Activated CD8-positive, alpha-beta T cell treated with anti-CD3 and anti-CD28 coated beads, Interleukin-2, amount 10 ng/mL, durations not matched to agents 7 days and 5 days (primary cell): ENCODE measurements at regions of chr20 and their contacts with region 1.

Region 1: GRCh38 chr20:44683263-44684046 is 31.7 kb upstream of the CCN5 start:
- DNase-seq: peak; percentile 81
- ATAC-seq: peak; percentile 84
- H3K4me3 Mint-ChIP-seq: no peak overlapping the region
- H3K27ac Mint-ChIP-seq: no peak overlapping the region
- H3K4me1 Mint-ChIP-seq: peaks cover 13% of the 10 kb centered on the region
- H3K27me3 Mint-ChIP-seq: no peaks in the 10 kb centered on the region

Region 2: DNA sequence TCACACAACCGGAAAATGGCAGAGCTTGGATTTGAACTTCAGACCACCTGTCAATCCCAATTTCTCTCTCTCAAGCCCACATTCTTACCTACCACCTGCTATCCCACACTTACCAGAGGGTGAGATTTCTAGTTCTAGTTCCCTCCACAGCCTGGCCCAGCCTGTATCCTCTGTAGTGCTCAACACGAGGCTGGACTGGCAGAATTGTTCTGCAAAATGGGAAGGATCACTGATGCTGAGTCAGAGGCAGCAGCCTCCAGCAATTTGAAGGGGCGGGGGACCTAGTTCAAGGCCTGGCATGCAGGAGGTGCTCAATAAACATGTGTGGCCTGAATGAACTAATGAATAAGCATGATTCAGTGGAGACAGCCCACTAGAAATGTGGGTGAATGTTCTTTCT is 261.4 kb before region 1 on chr20:
- CTCF ChIA-PET with region 1: no interaction called
- POLR2A ChIA-PET with region 1: no interaction called
- DNase-seq: no peak
- ATAC-seq: no peak
- H3K4me3 Mint-ChIP-seq: no peak overlapping the region
- H3K27ac Mint-ChIP-seq: no peak overlapping the region
- H3K4me1 Mint-ChIP-seq: no peaks in the 10 kb centered on the region
- H3K27me3 Mint-ChIP-seq: no peaks in the 10 kb centered on the region

Region 3: DNA sequence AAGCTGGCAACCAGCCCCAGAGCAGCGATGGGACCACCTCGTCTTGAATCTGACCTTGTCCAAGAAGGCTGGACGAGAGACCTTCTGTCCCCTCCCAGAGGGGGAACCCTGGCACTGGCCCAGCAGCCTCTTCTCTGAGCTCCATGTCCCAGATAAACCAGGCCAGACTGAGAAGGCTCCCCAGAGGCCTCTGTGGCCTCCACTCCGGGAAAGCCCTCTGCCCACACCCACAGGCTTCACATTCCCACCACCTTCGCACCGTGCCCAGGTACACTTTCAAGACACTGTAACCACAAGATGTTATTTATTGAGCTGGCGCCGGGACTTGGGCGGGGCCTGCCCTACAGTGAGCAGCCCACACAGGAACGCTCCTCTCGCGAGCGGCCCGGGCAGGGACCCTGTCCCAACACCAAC is 65.1 kb before region 1 on chr20:
- CTCF ChIA-PET with region 1: interaction called, 11 read pairs
- POLR2A ChIA-PET with region 1: no interaction called
- DNase-seq: no peak
- ATAC-seq: peak; percentile 41
- H3K4me3 Mint-ChIP-seq: no peak overlapping the region
- H3K27ac Mint-ChIP-seq: peak overlapping the region; percentile 70
- H3K4me1 Mint-ChIP-seq: peaks cover 39% of the 10 kb centered on the region
- H3K27me3 Mint-ChIP-seq: no peaks in the 10 kb centered on the region

Region 4: GRCh38 chr20:44664131-44664530 is 19.3 kb before region 1 on chr20:
- CTCF ChIA-PET with region 1: interaction called, 16 read pairs
- POLR2A ChIA-PET with region 1: interaction called, 3 read pairs
- DNase-seq: no peak
- ATAC-seq: no peak
- H3K4me3 Mint-ChIP-seq: no peak overlapping the region
- H3K27ac Mint-ChIP-seq: no peak overlapping the region
- H3K4me1 Mint-ChIP-seq: peaks cover 26% of the 10 kb centered on the region
- H3K27me3 Mint-ChIP-seq: no peaks in the 10 kb centered on the region

Region 5: GRCh38 chr20:44747166-44748004 is 63.9 kb after region 1 on chr20:
- CTCF ChIA-PET with region 1: interaction called, 10 read pairs
- POLR2A ChIA-PET with region 1: no interaction called
- DNase-seq: peak; percentile 73
- ATAC-seq: peak; percentile 45
- H3K4me3 Mint-ChIP-seq: no peak overlapping the region
- H3K27ac Mint-ChIP-seq: peak overlapping the region; percentile 44
- H3K4me1 Mint-ChIP-seq: peaks cover 6% of the 10 kb centered on the region
- H3K27me3 Mint-ChIP-seq: peaks cover 25% of the 10 kb centered on the region